Motor neuron (in vitro differentiated cells): ENCODE measurements at regions of chr4 and their contacts with region 1.

Region 1: GRCh38 chr4:147590249-147590920 is 26.8 kb upstream of the TMEM184C start:
- ATAC-seq: peak in 5 of 8 experiments; percentile 47 to 75 (median 50)
- H3K4me3 ChIP-seq: no peak overlapping the region
- H3K27ac ChIP-seq: no peak overlapping the region
- H3K4me1 ChIP-seq: peaks cover 5 to 9% of the 10 kb centered on the region in 2 donors

Region 2: GRCh38 chr4:147136310-147136709 is 454.1 kb before region 1 on chr4:
- in situ Hi-C with region 1: loop called in 1 of 9 experiments (anchors 25 kb)
- ATAC-seq: peak in 2 of 8 experiments; percentile 54 to 85
- H3K4me3 ChIP-seq: no peak overlapping the region
- H3K27ac ChIP-seq: no peak overlapping the region
- H3K4me1 ChIP-seq: peaks cover 0 to 4% of the 10 kb centered on the region in 2 donors

Region 3: DNA sequence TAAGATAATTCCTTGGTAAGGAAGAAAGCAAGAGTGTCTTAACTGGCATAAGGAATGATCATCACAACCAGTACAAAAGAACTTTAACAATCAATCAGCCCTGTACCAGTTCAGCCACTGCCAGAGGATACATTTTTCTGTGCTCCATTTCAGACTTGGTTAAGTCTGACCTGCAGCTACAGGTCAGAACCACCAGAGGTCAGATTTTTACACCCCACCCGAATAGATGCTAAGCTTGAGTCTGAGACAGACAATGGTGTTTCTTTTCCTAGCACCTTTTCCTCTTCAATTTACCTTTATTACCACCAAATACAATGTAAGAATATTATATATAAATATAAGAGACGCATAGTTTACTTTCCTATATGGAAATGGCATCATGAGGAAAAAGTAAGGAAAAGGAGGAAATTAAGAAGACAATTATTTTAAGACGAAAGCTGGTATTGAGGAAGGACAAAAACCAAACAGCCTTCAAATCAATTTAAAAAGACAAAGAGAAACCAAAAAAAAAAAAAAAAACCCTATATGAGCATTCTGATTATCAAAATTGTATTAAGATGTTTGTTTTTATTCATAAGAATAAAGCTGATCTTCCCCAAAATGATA is 429.4 kb before region 1 on chr4:
- in situ Hi-C with region 1: loop called in 5 of 9 experiments (anchors 25 kb)
- ATAC-seq: peak in 4 of 8 experiments; percentile 10 to 39 (median 26)
- H3K4me3 ChIP-seq: no peak overlapping the region
- H3K27ac ChIP-seq: no peak overlapping the region
- H3K4me1 ChIP-seq: peaks cover 6 to 10% of the 10 kb centered on the region in 2 donors